ENCODE measurements at regions of chr12 and their contacts with region 1.

Region 1: DNA sequence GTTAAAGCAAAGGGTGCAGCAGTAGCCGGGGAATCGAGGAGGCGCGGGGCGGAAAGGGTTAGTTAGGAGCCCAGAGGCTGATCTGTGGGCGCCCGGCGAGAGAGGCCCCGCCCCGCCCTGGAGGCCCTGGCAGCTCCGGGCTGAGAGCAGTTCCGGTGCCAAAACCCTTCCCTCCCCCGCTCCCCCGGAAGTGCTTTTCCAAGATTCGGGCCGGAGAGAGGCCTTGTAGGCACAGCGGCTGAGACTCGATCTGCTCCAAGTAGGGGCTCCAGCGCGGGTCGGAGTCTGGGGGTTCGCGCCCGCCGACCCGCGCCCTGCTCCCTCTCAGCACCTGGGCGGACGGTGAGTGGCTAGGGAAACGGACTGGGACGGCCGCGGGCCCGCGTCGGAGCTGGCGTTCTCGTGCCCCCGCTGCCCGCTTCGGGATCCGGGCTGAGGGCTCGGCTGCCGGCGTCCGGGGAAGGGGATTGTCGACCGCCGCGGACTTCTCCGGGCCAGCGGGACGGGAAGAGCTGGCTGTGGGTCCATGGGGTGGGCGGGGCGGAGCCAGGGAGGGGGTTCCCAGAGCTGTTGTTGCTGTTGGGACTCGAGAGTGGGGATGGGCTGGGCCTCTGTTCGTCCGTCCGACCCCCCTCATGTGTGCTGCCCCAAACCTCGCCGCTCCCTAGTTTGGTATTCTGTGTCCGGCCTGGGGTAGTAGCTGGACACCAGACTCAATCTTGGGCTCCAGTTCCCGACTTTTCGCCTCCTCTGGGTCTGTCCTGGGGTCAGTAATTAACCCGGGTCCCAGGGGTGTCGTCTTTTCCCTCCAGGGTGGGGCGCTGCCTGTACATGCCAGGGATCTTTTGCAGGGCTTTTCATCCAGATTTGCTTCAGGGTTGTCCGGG is at the start of gene FRS2:
- H3K4me3 Mint-ChIP-seq: peak within 1 kb of the TSS; percentile 98
- H3K27ac Mint-ChIP-seq: peak within 1 kb of the TSS; percentile 98
- H3K4me1 Mint-ChIP-seq: peaks cover 59% of the 10 kb centered on the region
- H3K27me3 Mint-ChIP-seq: no peaks in the 10 kb centered on the region

Region 2: GRCh38 chr12:69225251-69225910 is 245.1 kb before region 1 on chr12:
- intact Hi-C with region 1: no loop called
- H3K4me3 Mint-ChIP-seq: no peak overlapping the region
- H3K27ac Mint-ChIP-seq: no peak overlapping the region
- H3K4me1 Mint-ChIP-seq: no peaks in the 10 kb centered on the region
- H3K27me3 Mint-ChIP-seq: no peaks in the 10 kb centered on the region

Region 3: GRCh38 chr12:69388371-69388770 is 82.1 kb before region 1 on chr12:
- intact Hi-C with region 1: loop called (anchors 10 kb)
- H3K4me3 Mint-ChIP-seq: no peak overlapping the region
- H3K27ac Mint-ChIP-seq: no peak overlapping the region
- H3K4me1 Mint-ChIP-seq: no peaks in the 10 kb centered on the region
- H3K27me3 Mint-ChIP-seq: no peaks in the 10 kb centered on the region

Region 4: DNA sequence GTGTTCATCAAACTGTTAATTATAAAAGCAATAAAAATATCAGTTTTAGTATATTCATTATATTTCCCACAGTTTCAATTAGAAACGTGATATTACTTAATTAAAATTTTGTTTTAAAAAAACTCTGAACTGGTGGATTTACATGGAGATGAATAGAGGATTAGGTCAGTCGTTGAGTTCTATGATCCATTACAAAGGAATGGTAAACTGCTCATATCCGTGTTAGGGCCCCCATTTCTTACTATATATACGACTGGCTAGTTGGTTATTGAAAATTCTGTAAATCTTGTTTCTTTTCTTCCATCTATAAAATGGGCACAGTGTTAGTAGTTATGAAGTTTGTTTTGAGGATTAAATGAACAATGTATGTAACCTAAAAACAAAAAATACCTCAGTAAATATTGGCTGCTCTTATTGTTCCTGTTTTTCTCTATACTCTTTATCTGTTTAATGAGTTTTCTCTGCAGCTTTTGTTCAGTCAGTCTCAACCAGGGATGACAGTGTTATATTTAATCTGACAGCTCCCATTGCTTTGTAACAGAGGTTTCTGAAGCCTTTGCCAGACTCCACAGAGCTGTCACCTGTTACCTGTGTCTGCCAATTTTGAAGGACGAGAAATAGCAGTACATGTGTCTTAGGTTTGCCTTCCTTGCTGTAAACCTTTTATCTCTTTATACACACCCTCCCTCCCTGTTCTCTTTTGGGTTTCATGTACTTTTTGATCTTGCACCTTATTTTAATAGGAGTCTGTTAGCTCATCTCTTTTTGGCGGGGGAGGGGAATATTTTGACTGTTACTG is 41.2 kb after region 1 on chr12:
- intact Hi-C with region 1: no loop called
- H3K4me3 Mint-ChIP-seq: no peak overlapping the region
- H3K27ac Mint-ChIP-seq: no peak overlapping the region
- H3K4me1 Mint-ChIP-seq: peaks cover 26% of the 10 kb centered on the region
- H3K27me3 Mint-ChIP-seq: no peaks in the 10 kb centered on the region

Region 5: GRCh38 chr12:69563166-69563762 is 92.8 kb after region 1 on chr12:
- intact Hi-C with region 1: loop called (anchors 5 kb)
- H3K4me3 Mint-ChIP-seq: no peak overlapping the region
- H3K27ac Mint-ChIP-seq: no peak overlapping the region
- H3K4me1 Mint-ChIP-seq: no peaks in the 10 kb centered on the region
- H3K27me3 Mint-ChIP-seq: no peaks in the 10 kb centered on the region

Measured in dendritic cell treated with granulocyte-macrophage colony-stimulating factor and Interleukin-4, amounts not matched to agents 40 ng/mL and 50 ng/mL, for 4 days (primary cell).